ENCODE measurements at regions of chr11 and their contacts with region 1.

Region 1: GRCh38 chr11:102007567-102008437 is 39.4 kb upstream of the CFAP300 start:
- DNase-seq: no peak
- ATAC-seq: peak in 2 of 8 donors; percentile 56 to 59
- H3K4me3 ChIP-seq: no peak overlapping the region
- H3K27ac ChIP-seq: no peak overlapping the region
- H3K4me1 ChIP-seq: peaks cover 0 to 13% (median 9%) of the 10 kb centered on the region in 9 donors
- H3K27me3 ChIP-seq: no peaks in the 10 kb centered on the region
- CTCF ChIP-seq: peak; percentile 36 to 75 (median 67)

Region 2: GRCh38 chr11:101456812-101457211 is 551.0 kb before region 1 on chr11:
- intact Hi-C with region 1: loop called in 4 of 10 experiments (anchors 10 kb)
- DNase-seq: no peak
- ATAC-seq: peak in 1 of 8 donors; percentile 61
- H3K4me3 ChIP-seq: no peak overlapping the region
- H3K27ac ChIP-seq: no peak overlapping the region
- H3K4me1 ChIP-seq: no peaks in the 10 kb centered on the region
- H3K27me3 ChIP-seq: no peaks in the 10 kb centered on the region
- CTCF ChIP-seq: peak in 7 of 9 donors; percentile 42 to 66 (median 51)

Region 3: GRCh38 chr11:101860696-101861427 is 146.9 kb before region 1 on chr11:
- intact Hi-C with region 1: loop called (anchors 1 to 5 kb)
- DNase-seq: peak in 1 of 2 donors; percentile 28
- ATAC-seq: peak; percentile 67 to 97 (median 78)
- H3K4me3 ChIP-seq: no peak overlapping the region
- H3K27ac ChIP-seq: no peak overlapping the region
- H3K4me1 ChIP-seq: peaks cover 0 to 5% (median 0%) of the 10 kb centered on the region in 9 donors
- H3K27me3 ChIP-seq: no peaks in the 10 kb centered on the region
- CTCF ChIP-seq: peak; percentile 52 to 83 (median 74)

Region 4: GRCh38 chr11:101914738-101915426 is 92.9 kb before region 1 on chr11 and contains the start of gene CEP126:
- intact Hi-C with region 1: loop called in 2 of 10 experiments (anchors 5 to 10 kb)
- DNase-seq: peak; percentile 94
- ATAC-seq: peak; percentile 97 to 99 (median 98)
- H3K4me3 ChIP-seq: peak within 1 kb of the TSS; percentile 41 to 87 (median 73)
- H3K27ac ChIP-seq: peak within 1 kb of the TSS; percentile 12 to 85 (median 74)
- H3K4me1 ChIP-seq: peaks cover 0 to 32% (median 18%) of the 10 kb centered on the region in 9 donors
- H3K27me3 ChIP-seq: no peaks in the 10 kb centered on the region
- CTCF ChIP-seq: peak in 7 of 9 donors; percentile 30 to 75 (median 49)
- total RNA-seq, gene CEP126: 0.40 to 1.8 (median 1.2) TPM

Region 5: DNA sequence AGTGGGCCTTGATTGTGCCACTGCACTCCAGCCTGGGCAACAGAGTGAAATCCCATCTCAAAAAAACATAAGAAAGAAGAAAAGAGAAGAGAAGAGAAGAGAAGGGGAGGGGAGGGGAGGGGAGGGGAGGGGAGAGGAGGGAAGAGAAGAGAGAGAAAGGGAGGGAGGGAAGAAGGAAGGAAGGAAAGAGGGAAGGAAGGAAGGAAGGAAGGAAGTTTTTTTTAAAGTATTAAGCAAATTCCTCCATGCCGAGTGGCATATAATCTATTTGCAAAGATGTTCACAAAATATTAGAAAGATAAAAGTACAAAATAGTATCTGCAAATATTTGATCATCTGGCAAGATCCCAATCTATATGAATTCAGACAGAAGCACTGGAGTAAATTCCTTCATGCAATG is 29.0 kb after region 1 on chr11:
- intact Hi-C with region 1: no loop called
- DNase-seq: no peak
- ATAC-seq: no peak
- H3K4me3 ChIP-seq: no peak overlapping the region
- H3K27ac ChIP-seq: no peak overlapping the region
- H3K4me1 ChIP-seq: no peaks in the 10 kb centered on the region
- H3K27me3 ChIP-seq: no peaks in the 10 kb centered on the region
- CTCF ChIP-seq: no peak

Measured in heart right ventricle (tissue), 16 donors.